AG04449 (cell line): ENCODE measurements at regions of chr22 and their contacts with region 1.

Region 1: GRCh38 chr22:30005213-30005857 is 74.9 kb upstream of the HORMAD2 start:
- DNase-seq: no peak
- H3K4me3 ChIP-seq: no peak overlapping the region
- CTCF ChIP-seq: peak; percentile 94

Region 2: DNA sequence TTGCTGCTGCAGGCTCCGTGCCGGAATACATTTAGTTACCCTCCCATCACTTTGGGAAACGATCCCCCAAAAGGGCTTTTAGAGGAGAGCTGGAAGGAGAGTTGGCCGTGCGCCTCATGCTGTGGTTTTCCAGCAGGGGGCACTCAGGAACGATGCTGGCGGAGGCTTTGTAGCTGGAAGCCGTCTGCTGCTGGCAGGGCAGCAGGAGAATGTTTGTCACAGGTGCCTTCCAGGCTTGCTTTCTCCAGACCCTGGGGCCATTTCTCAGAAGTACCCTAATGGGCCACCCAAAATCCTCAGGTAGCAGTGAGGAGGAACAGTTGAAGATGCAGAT is 315.5 kb before region 1 on chr22:
- CTCF ChIA-PET with region 1: interaction called, 36 read pairs
- POLR2A ChIA-PET with region 1: no interaction called
- DNase-seq: no peak
- H3K4me3 ChIP-seq: no peak overlapping the region
- CTCF ChIP-seq: peak; percentile 85

Region 3: GRCh38 chr22:29772170-29772641 is 233.1 kb before region 1 on chr22:
- CTCF ChIA-PET with region 1: interaction called, 58 read pairs
- POLR2A ChIA-PET with region 1: interaction called, 3 read pairs
- DNase-seq: peak; percentile 37
- H3K4me3 ChIP-seq: no peak overlapping the region
- CTCF ChIP-seq: peak; percentile 64

Region 4: GRCh38 chr22:29806196-29806595 is 199.1 kb before region 1 on chr22:
- CTCF ChIA-PET with region 1: interaction called, 10 read pairs
- POLR2A ChIA-PET with region 1: no interaction called
- DNase-seq: no peak
- H3K4me3 ChIP-seq: no peak overlapping the region
- CTCF ChIP-seq: no peak

Region 5: DNA sequence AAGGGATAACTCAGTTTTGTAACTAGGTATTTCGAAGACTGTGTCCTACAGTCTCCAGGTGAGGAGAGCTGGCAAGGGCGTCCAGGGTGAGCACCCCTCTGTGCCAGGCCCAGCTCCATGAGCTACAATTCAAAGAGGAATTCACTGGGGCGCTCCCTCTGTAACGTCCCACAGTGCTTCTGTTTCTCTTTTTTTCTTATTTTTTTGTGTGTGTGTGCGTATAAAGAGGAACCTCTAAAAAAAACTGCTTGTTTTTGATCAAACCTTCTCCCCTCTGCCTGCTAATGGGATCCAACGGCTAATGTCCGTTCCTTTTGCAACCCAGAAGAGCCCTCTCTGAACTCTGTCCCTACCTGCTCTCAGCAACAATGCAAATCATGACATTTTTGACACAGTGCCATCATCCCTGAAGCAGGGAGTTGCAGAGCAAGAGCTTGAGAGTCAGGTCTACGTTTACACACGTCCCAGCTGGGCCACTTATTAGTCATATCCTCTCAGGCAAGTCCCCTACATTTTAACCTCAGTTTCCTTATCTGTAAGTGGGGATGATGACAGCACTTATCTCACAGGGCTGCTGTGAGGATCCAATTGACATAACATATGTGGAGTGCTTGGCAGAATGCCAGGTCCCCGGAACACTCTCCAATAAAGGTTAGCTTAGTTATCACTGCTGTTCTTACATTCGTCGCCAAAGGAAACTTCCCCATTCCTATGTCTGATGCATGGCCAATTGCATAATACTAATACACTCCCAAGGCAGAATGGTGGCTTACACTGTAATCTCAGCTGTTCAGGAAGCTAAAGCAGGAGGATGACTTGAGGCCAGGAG is 184.2 kb before region 1 on chr22:
- CTCF ChIA-PET with region 1: interaction called, 15 read pairs
- POLR2A ChIA-PET with region 1: no interaction called
- DNase-seq: peak; percentile 78
- H3K4me3 ChIP-seq: no peak overlapping the region
- CTCF ChIP-seq: no peak

Region 6: GRCh38 chr22:29979777-29980321 is 25.5 kb before region 1 on chr22:
- CTCF ChIA-PET with region 1: interaction called, 33 read pairs
- POLR2A ChIA-PET with region 1: no interaction called
- DNase-seq: no peak
- H3K4me3 ChIP-seq: no peak overlapping the region
- CTCF ChIP-seq: no peak

Region 7: GRCh38 chr22:30015846-30016245 is 10.5 kb after region 1 on chr22:
- CTCF ChIA-PET with region 1: interaction called, 87 read pairs
- POLR2A ChIA-PET with region 1: no interaction called
- DNase-seq: peak; percentile 55
- H3K4me3 ChIP-seq: no peak overlapping the region
- CTCF ChIP-seq: no peak